Panc1 (cell line): ENCODE measurements at regions of chr1 and their contacts with region 1.

Region 1: DNA sequence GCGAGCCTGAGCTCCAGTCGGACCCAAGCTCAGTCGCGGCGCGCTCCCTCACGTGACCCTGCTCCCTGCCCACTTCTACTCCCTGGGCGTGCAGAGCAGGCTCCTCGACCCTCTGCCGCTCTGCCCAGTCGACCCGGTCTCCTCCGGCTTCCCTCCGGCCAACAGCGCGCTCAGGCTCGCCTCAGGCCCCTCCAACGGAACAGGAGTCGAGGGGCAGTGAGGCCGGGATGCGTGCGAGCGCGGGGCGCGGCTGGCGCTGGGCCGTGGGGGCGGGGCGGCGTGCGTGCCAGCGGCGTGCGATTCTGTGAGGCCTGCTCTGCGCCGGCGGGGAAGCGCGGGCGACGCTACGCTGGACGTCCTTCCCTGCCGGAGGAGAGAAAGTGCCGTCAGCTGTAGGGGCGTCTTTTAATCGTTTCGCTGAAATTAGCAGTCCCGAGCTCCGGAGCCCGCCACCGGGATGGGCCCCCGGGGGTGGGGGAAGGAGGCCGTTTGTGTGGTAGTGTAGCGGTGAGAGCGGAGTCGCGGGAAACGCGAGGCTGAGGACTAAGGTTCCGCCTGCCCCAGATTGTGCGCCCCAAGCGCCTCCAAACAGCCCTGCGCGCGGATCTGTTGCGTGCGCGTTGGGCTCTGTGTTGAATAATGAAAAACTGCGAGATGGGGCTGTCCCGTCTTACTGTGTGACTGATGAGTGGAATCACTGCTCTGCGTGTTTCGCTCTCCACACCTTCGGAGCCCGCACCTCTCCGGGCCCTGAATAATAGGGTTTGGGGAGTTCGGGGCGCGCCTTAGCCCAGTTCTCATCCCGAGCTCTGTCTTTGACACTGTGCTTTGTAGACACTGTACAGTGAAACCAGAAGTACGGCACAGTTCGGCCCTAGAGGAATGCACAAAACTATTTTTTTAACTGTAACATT is at the start of gene ACBD6:
- DNase-seq: peak; percentile 52
- ATAC-seq: peak; percentile 94
- H3K4me3 ChIP-seq: peak within 1 kb of the TSS; percentile 96 to 99
- H3K27ac ChIP-seq: peak within 1 kb of the TSS; percentile 91
- H3K4me1 ChIP-seq: peaks cover 11% of the 10 kb centered on the region; the same call in 1 of the 2 replicates
- H3K27me3 ChIP-seq: no peaks in the 10 kb centered on the region
- CTCF ChIP-seq: no peak
- total RNA-seq, gene ACBD6: 48.5 TPM

Region 2: DNA sequence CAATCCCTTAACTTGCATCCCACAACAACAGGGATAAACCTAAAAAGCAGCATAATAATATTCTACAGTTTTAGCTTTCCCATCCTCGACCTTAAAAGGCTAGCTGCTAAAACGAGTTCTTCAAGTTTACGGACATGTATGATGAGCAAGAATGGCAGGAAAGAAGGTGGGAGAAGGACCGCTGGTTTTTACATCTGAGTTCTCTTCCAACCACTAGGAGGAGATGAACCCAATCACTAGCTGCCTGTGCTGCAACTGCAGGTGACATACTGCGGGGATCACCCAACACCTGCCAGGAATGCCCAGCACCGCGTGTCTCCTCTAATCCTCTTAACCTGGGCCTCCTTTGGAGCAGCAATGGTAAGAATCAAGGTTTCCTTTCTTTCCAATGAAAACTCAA is 1397.3 kb before region 1 on chr1:
- CTCF ChIA-PET with region 1: no interaction called
- POLR2A ChIA-PET with region 1: no interaction called
- in situ Hi-C with region 1: no loop called
- intact Hi-C with region 1: no loop called
- DNase-seq: no peak
- ATAC-seq: peak; percentile 62; the same call in 1 of the 2 replicates
- H3K4me3 ChIP-seq: no peak overlapping the region
- H3K27ac ChIP-seq: no peak overlapping the region
- H3K4me1 ChIP-seq: no peaks in the 10 kb centered on the region
- H3K27me3 ChIP-seq: no peaks in the 10 kb centered on the region
- CTCF ChIP-seq: peak; percentile 54

Region 3: DNA sequence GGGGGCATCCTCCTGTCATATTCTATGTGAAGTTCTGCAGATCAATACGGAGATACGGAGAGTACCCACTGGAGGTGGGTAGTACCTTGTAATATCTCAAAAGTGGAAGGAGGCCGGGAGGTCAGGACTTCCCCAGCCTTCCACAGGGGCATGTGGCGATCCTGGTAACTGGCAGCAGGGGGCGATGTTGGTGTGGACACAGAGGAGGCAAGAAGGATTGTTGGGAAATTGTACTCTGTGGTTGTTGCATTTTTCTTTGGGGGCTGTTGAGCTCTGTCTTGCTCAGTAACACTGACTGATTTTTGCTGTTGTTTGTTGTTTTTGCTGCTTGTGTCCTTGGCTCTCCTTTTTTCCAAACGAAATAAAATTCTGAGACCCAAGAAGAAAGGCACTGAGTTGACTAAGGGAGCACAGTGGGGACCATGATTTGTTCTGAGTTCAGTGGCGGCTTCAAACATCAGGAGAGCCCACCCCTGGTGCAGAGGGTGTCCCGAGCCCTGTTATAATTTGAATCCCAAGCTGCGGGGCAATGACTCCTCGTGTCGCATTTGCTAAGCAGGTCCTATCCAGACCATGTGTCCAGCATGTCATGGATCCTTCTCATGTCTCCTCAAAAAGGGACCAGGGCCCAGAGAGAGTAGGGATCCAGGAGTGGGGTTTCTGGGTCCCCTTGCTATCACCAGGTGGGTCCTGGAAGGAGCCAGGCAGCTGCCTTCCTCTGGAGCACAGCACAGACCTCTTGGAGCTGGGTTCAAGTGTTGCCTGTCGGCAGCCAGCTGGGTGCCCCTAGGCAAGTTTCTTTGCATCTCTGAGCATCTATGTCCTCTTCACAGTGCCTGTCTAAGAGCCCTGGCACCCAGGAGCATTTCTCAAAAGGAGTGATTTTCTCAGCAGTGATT is 249.7 kb before region 1 on chr1:
- CTCF ChIA-PET with region 1: no interaction called
- POLR2A ChIA-PET with region 1: interaction called, 10 read pairs
- in situ Hi-C with region 1: no loop called
- intact Hi-C with region 1: no loop called
- DNase-seq: peak; percentile 58
- ATAC-seq: peak; percentile 73
- H3K4me3 ChIP-seq: no peak overlapping the region
- H3K27ac ChIP-seq: no peak overlapping the region
- H3K4me1 ChIP-seq: no peaks in the 10 kb centered on the region
- H3K27me3 ChIP-seq: no peaks in the 10 kb centered on the region
- CTCF ChIP-seq: peak; percentile 93

Region 4: DNA sequence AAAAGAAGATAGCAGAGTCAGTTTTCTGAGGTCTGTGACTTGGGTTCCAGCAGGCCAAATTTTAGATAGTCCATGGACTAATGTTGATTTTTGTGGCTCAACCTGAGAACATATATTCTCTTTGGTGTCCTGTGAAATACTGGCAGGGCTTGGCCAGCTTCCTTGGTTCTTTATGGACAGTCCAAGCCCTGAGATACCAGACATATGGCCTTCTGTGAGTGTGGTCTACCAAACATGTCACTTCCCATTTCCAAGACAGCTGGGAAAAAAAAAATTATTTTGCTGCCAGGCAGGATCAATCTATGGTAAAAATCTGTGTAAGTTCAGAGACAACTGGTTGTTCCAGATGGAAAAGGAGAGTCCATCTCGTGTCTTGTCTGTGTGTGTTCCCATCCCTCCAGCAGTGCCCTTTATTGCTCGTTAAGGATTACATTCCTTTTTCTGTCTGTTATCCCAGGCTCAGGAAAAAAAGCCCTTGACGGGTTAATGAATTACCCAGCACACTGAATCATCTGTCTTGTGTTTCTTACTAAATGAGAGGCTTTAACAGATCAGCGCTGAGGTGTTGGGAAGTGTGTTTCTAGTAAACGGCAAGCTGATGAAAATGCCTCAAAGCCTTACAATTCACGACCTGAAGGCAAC is 95.8 kb after region 1 on chr1:
- CTCF ChIA-PET with region 1: no interaction called
- POLR2A ChIA-PET with region 1: no interaction called
- in situ Hi-C with region 1: no loop called
- intact Hi-C with region 1: no loop called
- DNase-seq: no peak
- ATAC-seq: no peak
- H3K4me3 ChIP-seq: no peak overlapping the region
- H3K27ac ChIP-seq: no peak overlapping the region
- H3K4me1 ChIP-seq: no peaks in the 10 kb centered on the region
- H3K27me3 ChIP-seq: no peaks in the 10 kb centered on the region
- CTCF ChIP-seq: no peak

Region 5: DNA sequence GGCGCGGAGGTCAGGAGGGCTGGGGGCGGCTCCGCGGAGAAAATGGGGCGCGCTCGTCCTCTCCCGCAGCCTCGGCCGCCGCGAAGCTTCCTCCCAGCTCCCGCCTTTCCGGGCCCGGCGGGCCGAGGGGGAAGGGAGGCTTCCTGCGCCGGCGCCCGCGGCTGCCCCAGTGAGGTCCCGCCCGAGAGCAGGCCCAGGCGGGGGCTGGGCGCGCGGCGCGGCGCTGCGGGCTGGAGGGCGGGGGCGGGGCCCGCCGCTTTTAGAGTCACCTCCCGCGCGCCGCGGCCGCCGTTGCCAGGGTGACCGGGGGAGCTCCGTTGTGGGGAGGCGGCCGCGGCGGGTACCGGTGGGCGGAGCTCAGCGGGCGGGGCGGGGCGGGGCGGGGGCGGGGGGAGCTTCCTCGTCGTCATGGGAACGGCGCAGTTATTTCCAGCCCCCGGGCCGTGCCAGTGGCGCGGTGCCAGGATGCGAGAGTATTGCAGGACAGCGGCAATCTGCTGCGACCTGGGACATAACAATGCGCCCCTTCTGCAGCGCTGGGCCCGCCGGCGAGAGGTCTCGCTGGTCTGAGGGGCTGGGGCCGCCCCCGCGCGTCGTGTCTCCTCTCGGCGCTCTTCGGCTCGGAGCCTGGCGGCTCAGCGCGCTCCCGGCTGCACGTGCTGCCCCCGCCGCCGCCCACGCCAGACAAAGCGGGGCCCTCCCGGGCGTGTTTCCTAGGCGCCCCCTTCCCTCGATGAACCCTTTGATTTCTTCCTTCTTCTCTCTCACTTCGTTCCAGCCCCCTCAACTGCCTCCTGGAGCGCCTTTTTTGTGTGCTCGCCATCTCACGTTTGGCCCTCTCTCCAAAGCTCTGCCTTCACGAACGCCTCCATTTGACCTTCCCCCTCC is 602.8 kb after region 1 on chr1:
- CTCF ChIA-PET with region 1: no interaction called
- POLR2A ChIA-PET with region 1: interaction called, 21 read pairs
- in situ Hi-C with region 1: no loop called
- intact Hi-C with region 1: no loop called
- DNase-seq: no peak
- ATAC-seq: peak; percentile 88
- H3K4me3 ChIP-seq: peak overlapping the region; percentile 66 to 81
- H3K27ac ChIP-seq: peak overlapping the region; percentile 92
- H3K4me1 ChIP-seq: peaks cover 71% of the 10 kb centered on the region
- H3K27me3 ChIP-seq: no peaks in the 10 kb centered on the region
- CTCF ChIP-seq: no peak